H1 (cell line): ENCODE measurements at regions of chr12 and their contacts with region 1.

Region 1: DNA sequence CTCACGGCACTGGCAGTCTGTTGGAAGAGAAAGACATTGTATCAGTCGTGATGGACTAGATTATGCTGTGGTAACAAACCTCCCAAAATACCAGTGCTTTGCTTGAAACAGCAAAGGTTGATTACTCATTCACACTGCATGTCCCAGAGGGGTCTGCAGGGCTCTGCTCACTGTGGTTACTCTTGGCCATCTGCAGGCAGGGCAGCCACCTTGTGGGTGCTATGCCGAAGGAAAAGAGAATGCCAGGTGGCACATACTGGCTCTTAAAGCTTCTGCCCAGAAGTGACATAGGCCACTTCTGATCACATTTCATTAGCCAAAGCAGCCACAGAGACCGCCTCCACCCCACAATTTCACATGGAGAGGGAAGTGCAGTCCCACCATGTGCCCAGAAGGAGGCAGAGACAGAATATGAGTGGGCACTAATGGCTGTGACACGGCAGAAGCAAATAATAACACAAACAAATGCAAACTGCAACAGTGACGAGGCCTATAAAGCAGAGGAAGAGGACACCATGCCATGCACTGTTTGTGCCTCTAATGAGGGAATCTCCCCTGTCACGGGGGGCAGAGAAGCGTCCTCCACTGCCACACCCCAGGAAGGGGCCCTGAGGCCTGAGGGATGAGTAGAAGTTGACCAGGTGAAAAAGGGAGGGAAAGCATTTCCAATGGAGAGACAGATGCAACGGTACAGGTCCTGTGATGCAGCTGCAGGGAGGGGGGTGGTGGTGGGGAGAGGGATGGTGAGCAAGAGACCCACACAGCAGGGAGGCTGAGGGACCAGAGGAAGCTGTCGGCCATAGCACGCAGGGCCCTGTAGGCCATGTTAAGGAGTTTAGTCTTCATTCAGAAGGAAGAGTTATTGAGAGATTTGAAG is 51.7 kb upstream of the KICS2 start:
- DNase-seq: peak; percentile 38 to 71
- H3K4me3 ChIP-seq: no peak overlapping the region
- H3K27ac ChIP-seq: no peak overlapping the region
- H3K4me1 ChIP-seq: peaks cover 0 to 7% (median 3%) of the 10 kb centered on the region in 4 experiments; a peak in 3 of 7 replicates
- H3K27me3 ChIP-seq: no peaks in the 10 kb centered on the region
- CTCF ChIP-seq: peak; percentile 76 to 86 (median 78)
- EP300 ChIP-seq: no peak
- POLR2A ChIP-seq: no peak
- RAD21 ChIP-seq: peak; percentile 86 to 87

Region 2: GRCh38 chr12:64392221-64392620 is 118.5 kb after region 1 on chr12:
- CTCF ChIA-PET with region 1: interaction called, 10 read pairs
- POLR2A ChIA-PET with region 1: no interaction called
- DNase-seq: no peak
- H3K4me3 ChIP-seq: no peak overlapping the region
- H3K27ac ChIP-seq: no peak overlapping the region
- H3K4me1 ChIP-seq: peaks cover 0 to 2% (median 0%) of the 10 kb centered on the region in 4 experiments; a peak in 3 of 7 replicates
- H3K27me3 ChIP-seq: peaks cover 0 to 8% (median 2%) of the 10 kb centered on the region in 4 experiments; a peak in 5 of 7 replicates
- CTCF ChIP-seq: peak in 2 of 3 experiments; percentile 16 to 28; a peak in 2 of 4 replicates
- EP300 ChIP-seq: no peak
- POLR2A ChIP-seq: no peak
- RAD21 ChIP-seq: peak; percentile 27 to 44; a peak in 3 of 4 replicates